Spleen (tissue), 13 donors: ENCODE measurements at regions of chr4 and their contacts with region 1.

Region 1: DNA sequence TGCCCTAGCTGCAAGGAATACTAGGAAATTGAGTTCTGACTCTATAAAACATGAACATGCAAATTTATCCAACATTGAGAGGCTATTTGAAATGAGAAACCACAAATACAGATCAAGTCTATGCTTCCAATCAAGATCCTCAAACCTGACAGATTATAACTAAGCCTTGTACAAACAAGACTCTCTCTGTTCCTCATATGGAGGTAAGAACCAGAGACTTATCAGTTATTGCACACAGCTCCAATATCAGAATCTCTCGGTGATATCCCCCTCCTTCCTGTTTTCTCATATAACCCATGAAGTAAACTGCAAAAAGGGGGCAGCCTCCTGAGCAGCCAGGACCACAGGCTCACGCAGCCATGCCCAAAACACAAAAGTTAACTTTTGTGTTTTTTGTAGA is 36.5 kb downstream of the FBXW7 start:
- DNase-seq: no peak
- H3K4me3 ChIP-seq: no peak overlapping the region
- H3K27ac ChIP-seq: no peak overlapping the region
- H3K4me1 ChIP-seq: peaks cover 0 to 42% (median 20%) of the 10 kb centered on the region in 6 donors
- H3K27me3 ChIP-seq: no peaks in the 10 kb centered on the region
- CTCF ChIP-seq: no peak
- POLR2A ChIP-seq: no peak

Region 2: GRCh38 chr4:152613841-152614721 is 114.7 kb after region 1 on chr4:
- intact Hi-C with region 1: no loop called
- DNase-seq: no peak
- H3K4me3 ChIP-seq: no peak overlapping the region
- H3K27ac ChIP-seq: no peak overlapping the region
- H3K4me1 ChIP-seq: peaks cover 0 to 3% (median 0%) of the 10 kb centered on the region in 6 donors
- H3K27me3 ChIP-seq: no peaks in the 10 kb centered on the region
- CTCF ChIP-seq: no peak
- POLR2A ChIP-seq: no peak

Region 3: DNA sequence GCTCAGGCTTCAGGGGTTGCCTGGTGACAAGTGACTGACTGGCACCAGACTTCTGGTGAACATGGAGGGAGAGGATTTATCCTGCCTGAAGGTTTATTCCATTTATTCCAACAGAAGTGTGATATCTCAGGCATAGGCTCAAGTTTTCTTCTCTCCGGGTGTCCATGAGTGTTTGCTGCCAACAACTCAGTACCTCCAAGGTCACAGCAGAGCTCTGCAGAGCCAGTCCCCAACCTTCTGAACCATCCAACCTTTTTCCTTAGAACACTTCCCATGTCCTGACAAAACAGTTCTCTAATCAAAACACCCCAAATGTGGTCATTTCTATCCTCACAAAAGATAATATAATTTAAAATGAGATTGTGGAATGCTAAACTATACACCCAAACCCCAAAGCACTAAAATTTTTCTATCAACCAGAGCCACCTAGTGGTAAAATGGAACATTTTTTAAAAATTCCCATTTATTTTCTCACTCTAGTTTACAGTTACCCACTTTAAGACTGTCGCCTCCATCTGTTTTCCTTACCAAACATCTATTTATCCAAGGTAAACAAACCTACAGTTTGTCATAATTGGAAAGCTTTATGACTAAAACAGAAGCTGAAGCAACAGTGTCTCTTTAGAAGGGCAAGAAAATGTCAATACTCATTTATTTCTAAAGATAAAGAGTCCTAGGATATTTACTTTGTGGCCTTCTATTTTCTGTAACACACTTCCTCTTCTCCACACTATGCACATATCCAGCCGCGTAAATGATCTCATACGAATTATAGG is 140.9 kb after region 1 on chr4:
- intact Hi-C with region 1: loop called (anchors 5 kb)
- DNase-seq: no peak
- H3K4me3 ChIP-seq: no peak overlapping the region
- H3K27ac ChIP-seq: peak overlapping the region in 4 of 8 donors; percentile 2 to 92 (median 22)
- H3K4me1 ChIP-seq: peaks cover 9 to 85% (median 40%) of the 10 kb centered on the region in 6 donors
- H3K27me3 ChIP-seq: no peaks in the 10 kb centered on the region
- CTCF ChIP-seq: peak in 9 of 11 experiments; percentile 20 to 66 (median 54)
- POLR2A ChIP-seq: no peak

Region 4: DNA sequence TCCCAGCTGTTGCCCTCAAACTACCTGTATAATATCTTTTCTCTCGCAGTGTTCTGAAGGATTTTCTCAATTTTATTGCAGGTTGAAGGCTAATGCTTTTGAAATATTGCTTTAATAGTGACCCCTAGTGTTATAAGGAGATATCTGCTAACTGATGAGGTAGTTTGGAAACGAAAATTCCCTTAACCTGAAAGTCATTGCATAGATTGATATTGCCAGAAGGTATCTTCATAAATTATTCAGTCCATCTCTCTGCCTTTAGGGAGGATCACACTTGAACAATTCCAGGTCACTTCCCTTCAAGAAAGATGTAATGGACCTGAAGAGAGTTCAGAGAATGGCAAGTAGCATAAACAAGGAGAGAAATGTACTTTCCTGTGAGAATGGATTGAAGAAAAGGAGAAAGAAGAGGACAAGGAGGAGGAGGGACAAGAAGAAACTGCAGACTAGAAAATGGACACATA is 236.1 kb after region 1 on chr4:
- intact Hi-C with region 1: loop called (anchors 10 kb)
- DNase-seq: no peak
- H3K4me3 ChIP-seq: no peak overlapping the region
- H3K27ac ChIP-seq: no peak overlapping the region
- H3K4me1 ChIP-seq: peaks cover 0 to 20% (median 5%) of the 10 kb centered on the region in 6 donors
- H3K27me3 ChIP-seq: no peaks in the 10 kb centered on the region
- CTCF ChIP-seq: peak; percentile 35 to 74 (median 64)
- POLR2A ChIP-seq: no peak